ENCODE measurements at regions of chr3 and their contacts with region 1.

Region 1: DNA sequence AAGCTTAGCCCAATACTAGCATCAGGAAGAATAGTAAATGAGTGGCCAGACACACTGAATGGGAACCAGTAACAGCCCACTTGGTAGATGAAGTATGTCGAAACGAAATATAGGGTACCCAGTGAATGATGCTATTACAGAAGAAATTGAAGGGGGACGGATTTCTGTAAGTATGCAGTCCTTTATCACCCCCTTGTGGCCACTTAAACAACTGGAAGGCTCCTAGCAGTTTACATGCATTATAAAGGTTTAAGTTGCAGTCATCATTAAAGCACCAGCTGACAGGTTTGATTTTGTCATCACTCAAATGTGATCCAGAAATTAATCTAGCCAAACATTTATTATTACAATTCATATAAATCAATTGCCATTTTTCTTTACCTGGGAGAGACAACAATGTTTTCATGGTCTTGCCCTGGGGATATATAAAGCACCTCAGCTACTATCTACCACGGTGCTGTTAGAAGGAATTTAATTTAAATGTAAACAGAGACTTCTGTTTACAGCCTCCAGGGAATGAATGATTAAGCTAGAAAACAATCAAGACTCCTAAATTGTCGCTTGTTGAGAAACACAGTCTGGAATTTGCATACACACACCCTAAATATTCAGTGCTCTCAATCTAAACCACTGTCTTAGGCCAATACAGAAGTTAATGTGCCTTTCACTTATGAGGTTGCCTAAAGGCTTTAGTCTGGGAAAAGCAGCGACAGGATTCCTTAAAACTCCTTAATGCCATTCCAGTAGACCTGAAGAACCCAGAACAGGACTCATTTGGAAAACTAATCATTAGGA is 7.8 kb downstream of the EIF1B start:
- DNase-seq: peak in 1 of 2 donors; percentile 85
- H3K4me3 ChIP-seq: no peak overlapping the region
- H3K27ac ChIP-seq: no peak overlapping the region
- H3K4me1 ChIP-seq: peaks cover 6 to 25% (median 17%) of the 10 kb centered on the region in 4 donors
- H3K27me3 ChIP-seq: no peaks in the 10 kb centered on the region
- CTCF ChIP-seq: peak in 5 of 7 experiments; percentile 43 to 86 (median 82)
- EP300 ChIP-seq: no peak
- POLR2A ChIP-seq: no peak

Region 2: GRCh38 chr3:40187945-40188344 is 129.3 kb before region 1 on chr3:
- intact Hi-C with region 1: loop called (anchors 5 kb)
- DNase-seq: no peak
- H3K4me3 ChIP-seq: no peak overlapping the region
- H3K27ac ChIP-seq: no peak overlapping the region
- H3K4me1 ChIP-seq: no peaks in the 10 kb centered on the region
- H3K27me3 ChIP-seq: no peaks in the 10 kb centered on the region
- CTCF ChIP-seq: no peak
- EP300 ChIP-seq: no peak
- POLR2A ChIP-seq: no peak

Measured in stomach (tissue), 19 donors.